MCF 10A (cell line): ENCODE measurements at regions of chr17 and their contacts with region 1.

Region 1: DNA sequence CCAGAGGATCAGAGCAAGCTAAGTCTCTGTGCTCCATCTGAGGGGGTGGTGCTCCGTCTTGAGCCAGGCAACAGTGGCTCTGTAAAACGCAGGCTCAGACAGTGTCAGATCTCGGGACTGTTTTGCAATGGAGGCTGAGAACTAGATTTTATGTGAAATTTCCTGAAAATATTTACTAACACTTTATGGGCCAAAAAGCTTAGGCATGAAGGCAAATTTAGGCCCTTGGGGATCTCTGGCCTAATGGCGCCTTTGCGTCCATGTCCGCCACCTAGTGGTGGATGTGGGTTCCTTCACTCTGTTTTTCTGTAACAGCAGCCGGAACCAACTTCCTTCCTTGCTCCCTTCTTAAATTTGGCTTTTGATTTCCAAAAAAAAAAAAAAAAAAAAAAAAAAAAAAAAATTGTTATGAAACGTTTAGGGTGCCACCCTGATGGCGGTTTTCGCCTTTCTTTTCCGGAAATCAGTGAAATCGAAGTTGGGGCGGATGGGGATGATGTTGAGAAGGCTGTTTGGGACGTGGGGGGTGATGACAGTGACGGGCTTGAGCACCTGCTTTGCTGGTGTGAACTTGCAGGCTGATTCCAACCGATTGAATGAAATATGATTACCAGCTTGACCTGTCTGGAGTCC is 14.0 kb upstream of the ELAC2 start:
- DNase-seq: peak; percentile 57
- H3K4me3 Mint-ChIP-seq: no peak overlapping the region
- H3K27ac Mint-ChIP-seq: no peak overlapping the region
- H3K4me1 Mint-ChIP-seq: peaks cover 5% of the 10 kb centered on the region
- H3K27me3 Mint-ChIP-seq: peaks cover 37% of the 10 kb centered on the region
- CTCF ChIP-seq: peak; percentile 65

Region 2: DNA sequence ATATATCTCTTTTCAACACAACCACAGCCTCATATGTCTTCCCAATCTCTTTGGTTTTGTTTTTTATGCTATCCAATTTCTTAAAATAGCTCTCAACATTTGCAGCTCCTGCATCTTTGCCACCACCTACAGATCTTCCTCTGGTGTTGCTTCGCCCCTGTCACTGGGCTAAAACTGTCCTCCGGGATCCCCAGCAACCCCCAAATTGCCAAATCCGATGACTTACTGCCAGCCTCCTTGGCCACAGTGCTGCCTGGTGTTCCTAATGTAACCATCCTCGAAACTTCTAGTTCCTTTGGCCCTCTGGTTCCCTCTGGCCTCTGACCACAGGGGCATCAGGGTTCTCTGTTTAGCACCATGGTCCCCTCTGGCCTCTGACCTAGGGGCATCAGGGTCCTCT is 84.8 kb before region 1 on chr17:
- CTCF ChIA-PET with region 1: no interaction called
- POLR2A ChIA-PET with region 1: no interaction called
- intact Hi-C with region 1: no loop called
- DNase-seq: no peak
- H3K4me3 Mint-ChIP-seq: no peak overlapping the region
- H3K27ac Mint-ChIP-seq: no peak overlapping the region
- H3K4me1 Mint-ChIP-seq: no peaks in the 10 kb centered on the region
- H3K27me3 Mint-ChIP-seq: peaks cover 20% of the 10 kb centered on the region
- CTCF ChIP-seq: no peak

Region 3: GRCh38 chr17:13002766-13003451 is 28.9 kb before region 1 on chr17:
- CTCF ChIA-PET with region 1: interaction called, 17 read pairs
- POLR2A ChIA-PET with region 1: no interaction called
- intact Hi-C with region 1: no loop called
- DNase-seq: peak; percentile 78
- H3K4me3 Mint-ChIP-seq: no peak overlapping the region
- H3K27ac Mint-ChIP-seq: no peak overlapping the region
- H3K4me1 Mint-ChIP-seq: no peaks in the 10 kb centered on the region
- H3K27me3 Mint-ChIP-seq: no peaks in the 10 kb centered on the region
- CTCF ChIP-seq: peak; percentile 78

Region 4: DNA sequence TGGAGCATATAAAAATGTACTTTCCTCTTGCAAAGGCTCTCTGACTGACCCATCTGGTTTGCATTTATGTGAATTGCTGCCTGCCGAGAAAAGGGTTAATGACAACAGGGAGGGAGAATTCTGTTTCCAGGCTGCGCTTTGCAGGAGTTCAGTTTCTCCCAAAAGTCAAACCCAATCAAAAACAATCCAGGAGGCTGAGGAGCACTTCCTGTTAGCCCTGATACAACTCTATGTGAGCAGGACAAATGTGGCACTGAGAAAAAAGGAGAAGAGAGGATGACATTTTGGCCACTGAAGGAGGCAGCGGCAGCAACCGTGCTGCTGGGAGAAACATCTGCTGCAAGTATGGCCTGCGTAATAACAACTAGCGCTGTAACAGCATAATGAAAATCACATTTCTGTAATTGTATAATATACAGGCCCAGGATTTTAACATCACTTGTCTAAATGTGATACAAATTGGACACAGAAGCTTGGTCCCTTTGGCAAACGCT is 12.8 kb after region 1 on chr17:
- CTCF ChIA-PET with region 1: interaction called, 61 read pairs
- POLR2A ChIA-PET with region 1: interaction called, 4 read pairs
- intact Hi-C with region 1: no loop called
- DNase-seq: no peak
- H3K4me3 Mint-ChIP-seq: no peak overlapping the region
- H3K27ac Mint-ChIP-seq: no peak overlapping the region
- H3K4me1 Mint-ChIP-seq: no peaks in the 10 kb centered on the region
- H3K27me3 Mint-ChIP-seq: peaks cover 71% of the 10 kb centered on the region
- CTCF ChIP-seq: no peak

Region 5: GRCh38 chr17:13067629-13068303 is 35.9 kb after region 1 on chr17:
- CTCF ChIA-PET with region 1: interaction called, 14 read pairs
- POLR2A ChIA-PET with region 1: no interaction called
- intact Hi-C with region 1: no loop called
- DNase-seq: no peak
- H3K4me3 Mint-ChIP-seq: no peak overlapping the region
- H3K27ac Mint-ChIP-seq: no peak overlapping the region
- H3K4me1 Mint-ChIP-seq: no peaks in the 10 kb centered on the region
- H3K27me3 Mint-ChIP-seq: peaks cover 52% of the 10 kb centered on the region
- CTCF ChIP-seq: no peak

Region 6: GRCh38 chr17:13230350-13231264 is 198.8 kb after region 1 on chr17:
- CTCF ChIA-PET with region 1: interaction called, 20 read pairs
- POLR2A ChIA-PET with region 1: no interaction called
- intact Hi-C with region 1: loop called (anchors 2 kb)
- DNase-seq: peak; percentile 15
- H3K4me3 Mint-ChIP-seq: no peak overlapping the region
- H3K27ac Mint-ChIP-seq: no peak overlapping the region
- H3K4me1 Mint-ChIP-seq: no peaks in the 10 kb centered on the region
- H3K27me3 Mint-ChIP-seq: peaks cover 92% of the 10 kb centered on the region
- CTCF ChIP-seq: peak; percentile 11

Region 7: DNA sequence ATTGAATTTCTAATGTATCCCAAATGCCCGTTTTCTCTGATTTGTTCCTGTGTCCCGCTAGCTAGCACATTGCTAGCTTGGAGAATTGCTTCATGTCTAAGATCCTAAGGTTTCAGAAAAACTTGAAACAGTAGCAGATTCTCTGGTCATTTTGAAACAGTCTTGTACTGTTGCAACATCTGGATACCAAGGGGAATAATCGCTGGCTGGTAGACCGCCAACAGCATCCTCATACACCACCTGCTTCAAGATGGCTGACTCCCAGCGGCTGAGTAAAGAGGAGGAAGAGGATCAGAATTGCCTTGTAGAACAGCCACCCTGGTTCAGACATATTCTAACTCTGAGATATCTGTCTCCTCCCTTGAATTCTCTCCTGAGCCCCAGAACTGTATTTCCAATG is 212.7 kb after region 1 on chr17:
- CTCF ChIA-PET with region 1: no interaction called
- POLR2A ChIA-PET with region 1: no interaction called
- intact Hi-C with region 1: no loop called
- DNase-seq: peak; percentile 35
- H3K4me3 Mint-ChIP-seq: no peak overlapping the region
- H3K27ac Mint-ChIP-seq: no peak overlapping the region
- H3K4me1 Mint-ChIP-seq: no peaks in the 10 kb centered on the region
- H3K27me3 Mint-ChIP-seq: peaks cover 76% of the 10 kb centered on the region
- CTCF ChIP-seq: no peak